AG04449 (cell line): ENCODE measurements at regions of chr17 and their contacts with region 1.

Region 1: GRCh38 chr17:4229627-4230541 is 33.9 kb downstream of the ANKFY1 start:
- DNase-seq: peak; percentile 94
- H3K4me3 ChIP-seq: peak overlapping the region; percentile 26
- CTCF ChIP-seq: no peak

Region 2: DNA sequence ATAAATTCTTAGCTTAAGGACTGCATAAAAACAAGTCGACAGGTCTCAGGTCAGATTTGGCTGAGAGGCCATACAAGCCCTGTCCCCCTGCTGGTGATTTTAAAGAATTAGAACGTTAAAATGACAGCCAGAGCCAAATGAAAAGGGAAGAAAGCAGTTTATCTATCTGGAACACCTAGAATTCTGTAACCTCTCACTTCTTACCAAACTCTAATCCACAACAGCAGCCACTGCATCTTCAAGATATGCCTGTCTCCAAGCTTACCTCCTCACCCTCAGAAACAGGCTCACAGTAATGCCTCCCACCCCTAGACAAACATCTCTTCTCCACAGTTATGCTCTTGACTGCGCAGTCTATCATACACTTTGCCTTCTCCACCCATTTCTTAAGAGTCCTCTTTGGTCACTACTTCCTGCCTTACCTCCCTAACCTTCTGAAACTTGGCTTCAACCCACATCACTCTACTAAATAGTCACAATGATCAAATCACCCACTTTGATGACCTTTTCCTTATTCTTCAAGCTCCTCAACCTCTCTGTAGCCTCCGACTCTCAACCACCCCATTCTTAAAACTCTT is 19.7 kb after region 1 on chr17:
- CTCF ChIA-PET with region 1: interaction called, 18 read pairs
- POLR2A ChIA-PET with region 1: interaction called, 4 read pairs
- DNase-seq: no peak
- H3K4me3 ChIP-seq: no peak overlapping the region
- CTCF ChIP-seq: peak; percentile 41